RWPE1 (cell line): ENCODE measurements at regions of chr16 and their contacts with region 1.

Region 1: DNA sequence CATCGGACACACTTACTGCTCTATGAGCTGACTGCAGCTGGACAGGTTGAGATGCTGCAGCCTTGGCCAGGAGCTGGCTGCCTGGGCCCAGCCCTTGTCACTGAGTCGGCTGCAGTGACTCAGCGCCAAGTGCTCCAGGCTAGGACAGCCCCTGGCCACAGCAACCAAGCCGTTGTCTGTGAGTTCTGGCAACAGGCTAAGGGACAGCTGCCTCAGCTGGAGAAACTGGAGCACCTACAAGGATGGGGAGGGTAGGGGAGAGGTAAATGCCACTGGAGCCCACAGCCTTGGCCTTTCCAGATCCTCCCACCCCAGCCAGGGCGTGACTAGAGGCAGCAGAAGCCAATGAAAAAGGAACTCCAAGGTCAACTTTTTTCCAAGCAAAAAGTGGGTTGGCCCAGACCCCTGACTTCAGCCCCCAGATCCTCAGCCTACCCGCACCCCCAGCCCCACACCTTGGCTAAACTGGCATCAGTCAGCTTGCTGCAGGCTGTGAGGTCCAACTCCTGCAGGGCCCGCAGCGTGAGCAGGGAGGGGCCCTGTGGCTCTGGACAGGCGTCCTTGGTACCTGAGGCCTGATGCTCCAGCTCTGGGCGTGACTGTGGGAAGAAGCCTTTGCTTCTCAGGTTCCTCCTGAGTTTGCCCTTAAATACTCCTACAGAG is 9.1 kb downstream of the ELMO3 start:
- DNase-seq: peak; percentile 42
- H3K27ac ChIP-seq: peak overlapping the region; percentile 87
- CTCF ChIP-seq: no peak

Region 2: GRCh38 chr16:67246934-67247697 is 39.1 kb after region 1 on chr16 and contains the start of gene FHOD1:
- CTCF ChIA-PET with region 1: no interaction called
- POLR2A ChIA-PET with region 1: interaction called, 14 read pairs
- DNase-seq: peak; percentile 94
- H3K27ac ChIP-seq: peak within 1 kb of the TSS; percentile 92
- CTCF ChIP-seq: no peak

Region 3: DNA sequence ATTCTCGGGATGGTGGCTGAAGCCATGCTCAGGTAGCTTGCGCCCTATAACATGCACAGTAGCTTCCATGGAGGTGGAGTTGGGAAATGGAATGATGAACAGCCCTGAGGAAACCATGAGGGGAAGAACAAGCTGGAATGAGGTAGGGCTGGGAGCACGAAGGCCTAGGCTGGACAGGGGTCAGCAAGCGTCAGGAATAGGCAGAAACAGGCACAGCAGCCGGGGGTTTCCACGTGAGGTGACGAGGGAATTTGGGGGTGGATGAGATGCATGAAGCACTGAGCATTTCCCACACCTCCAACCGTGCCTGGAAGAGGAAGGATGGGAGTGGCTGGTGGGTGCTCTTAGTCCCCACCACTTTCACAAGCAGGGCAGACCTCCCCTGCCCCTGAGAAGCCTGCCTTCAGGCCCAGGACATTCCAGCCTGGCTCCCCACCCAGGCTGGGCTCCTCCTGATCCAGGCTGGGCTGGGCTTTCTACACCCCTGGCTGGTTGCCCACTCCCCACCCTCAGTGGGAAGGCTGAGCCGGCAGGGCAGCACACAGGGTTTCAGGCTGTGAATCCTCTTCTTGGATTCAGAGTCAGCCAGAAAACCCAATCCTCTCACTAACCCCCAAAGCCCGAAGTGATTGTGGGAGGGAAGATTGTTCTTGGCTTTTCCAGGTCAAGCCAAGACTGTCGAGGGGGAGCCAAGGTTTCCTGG is 93.2 kb after region 1 on chr16:
- CTCF ChIA-PET with region 1: no interaction called
- POLR2A ChIA-PET with region 1: no interaction called
- DNase-seq: no peak
- H3K27ac ChIP-seq: no peak overlapping the region
- CTCF ChIP-seq: no peak